ENCODE measurements at regions of chr17 and their contacts with region 1.

Region 1: DNA sequence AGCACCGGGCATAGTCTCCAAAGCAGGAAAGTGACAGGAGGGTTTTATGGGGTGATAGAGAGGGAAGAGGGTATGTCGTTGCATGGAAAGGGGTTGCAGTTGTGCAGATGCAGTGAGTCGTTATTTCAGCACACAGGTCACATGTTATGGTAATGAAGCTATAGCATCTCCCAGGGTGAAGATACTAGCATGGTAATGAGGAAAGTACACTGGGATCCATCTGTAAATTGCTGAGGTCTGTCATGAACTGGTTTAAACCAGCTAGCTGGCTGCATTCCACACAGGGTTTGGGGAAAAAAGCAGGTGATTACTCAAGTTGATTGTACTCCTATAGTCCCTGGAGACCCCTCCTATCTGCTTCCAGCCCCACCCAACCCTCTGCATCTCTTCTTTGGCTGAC is 11.7 kb downstream of the COX11 start:
- DNase-seq: no peak
- ATAC-seq: no peak
- H3K4me3 Mint-ChIP-seq: no peak overlapping the region
- H3K27ac Mint-ChIP-seq: peak overlapping the region; percentile 19
- H3K4me1 Mint-ChIP-seq: no peaks in the 10 kb centered on the region
- H3K27me3 Mint-ChIP-seq: no peaks in the 10 kb centered on the region

Region 2: DNA sequence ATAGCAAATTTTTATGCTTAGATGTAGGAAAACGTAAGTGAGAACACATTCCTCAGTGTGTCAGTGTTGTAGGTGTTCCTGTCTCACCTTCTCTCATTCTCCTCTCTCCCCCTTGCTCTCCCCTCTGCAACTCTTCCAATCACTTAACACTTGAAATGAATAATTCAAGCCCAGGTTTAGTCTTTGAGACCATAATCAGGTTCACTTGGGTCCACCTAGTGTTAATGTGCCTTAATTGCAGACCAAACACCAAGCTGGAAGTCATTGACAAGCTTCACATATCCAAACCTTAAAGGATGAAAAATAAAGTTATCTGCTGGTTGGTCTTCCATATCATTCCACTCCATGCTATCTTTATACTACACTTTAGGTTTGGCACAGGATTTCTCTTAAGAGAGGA is 48.7 kb after region 1 on chr17:
- CTCF ChIA-PET with region 1: no interaction called
- POLR2A ChIA-PET with region 1: no interaction called
- intact Hi-C with region 1: loop called in 1 of 2 experiments (anchors 10 kb)
- DNase-seq: no peak
- ATAC-seq: no peak
- H3K4me3 Mint-ChIP-seq: no peak overlapping the region
- H3K27ac Mint-ChIP-seq: no peak overlapping the region
- H3K4me1 Mint-ChIP-seq: no peaks in the 10 kb centered on the region
- H3K27me3 Mint-ChIP-seq: no peaks in the 10 kb centered on the region

Measured in activated CD4-positive, alpha-beta T cell treated with anti-CD3 and anti-CD28 coated beads for 36 hours (primary cell).